Activated naive CD4-positive, alpha-beta T cell treated with anti-CD3 and anti-CD28 coated beads for 36 hours (primary cell): ENCODE measurements at regions of chr2 and their contacts with region 1.

Region 1: GRCh38 chr2:230902180-230902899 is 22.7 kb downstream of the GPR55 start:
- DNase-seq: peak; percentile 70
- H3K4me3 Mint-ChIP-seq: no peak overlapping the region
- H3K27ac Mint-ChIP-seq: no peak overlapping the region
- H3K4me1 Mint-ChIP-seq: peaks cover 34% of the 10 kb centered on the region
- H3K27me3 Mint-ChIP-seq: peaks cover 15% of the 10 kb centered on the region

Region 2: GRCh38 chr2:230847883-230848388 is 54.4 kb before region 1 on chr2:
- CTCF ChIA-PET with region 1: interaction called, 11 read pairs
- intact Hi-C with region 1: loop called (anchors 2 kb)
- DNase-seq: peak; percentile 97
- H3K4me3 Mint-ChIP-seq: no peak overlapping the region
- H3K27ac Mint-ChIP-seq: peak overlapping the region; percentile 31
- H3K4me1 Mint-ChIP-seq: peaks cover 14% of the 10 kb centered on the region
- H3K27me3 Mint-ChIP-seq: peaks cover 13% of the 10 kb centered on the region

Region 3: DNA sequence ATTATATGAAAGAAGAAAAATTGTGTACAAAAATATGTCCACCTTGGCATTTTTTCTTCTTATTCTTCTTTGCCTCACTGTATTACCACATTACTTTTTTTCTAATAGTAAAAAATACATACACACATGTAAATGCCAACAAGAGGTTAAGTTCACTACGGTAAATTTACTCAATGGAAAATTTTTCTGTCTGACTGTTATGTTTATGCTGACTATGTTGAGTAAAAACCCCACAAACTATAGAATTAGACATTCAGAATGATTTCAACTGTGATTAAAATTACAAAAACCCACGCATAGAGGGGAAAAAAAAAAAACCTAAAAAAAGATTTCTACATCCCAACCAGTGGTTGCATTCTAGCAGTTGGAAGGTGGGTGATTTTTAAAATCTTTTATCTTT is 17.3 kb after region 1 on chr2:
- CTCF ChIA-PET with region 1: interaction called, 7 read pairs
- intact Hi-C with region 1: loop called (anchors 1 kb)
- DNase-seq: no peak
- H3K4me3 Mint-ChIP-seq: peak overlapping the region; percentile 47
- H3K27ac Mint-ChIP-seq: no peak overlapping the region
- H3K4me1 Mint-ChIP-seq: peaks cover 67% of the 10 kb centered on the region
- H3K27me3 Mint-ChIP-seq: peaks cover 2% of the 10 kb centered on the region

Region 4: GRCh38 chr2:230932556-230933511 is 30.5 kb after region 1 on chr2:
- CTCF ChIA-PET with region 1: no interaction called
- intact Hi-C with region 1: no loop called
- DNase-seq: no peak
- H3K4me3 Mint-ChIP-seq: no peak overlapping the region
- H3K27ac Mint-ChIP-seq: no peak overlapping the region
- H3K4me1 Mint-ChIP-seq: peaks cover 2% of the 10 kb centered on the region
- H3K27me3 Mint-ChIP-seq: peaks cover 8% of the 10 kb centered on the region

Region 5: DNA sequence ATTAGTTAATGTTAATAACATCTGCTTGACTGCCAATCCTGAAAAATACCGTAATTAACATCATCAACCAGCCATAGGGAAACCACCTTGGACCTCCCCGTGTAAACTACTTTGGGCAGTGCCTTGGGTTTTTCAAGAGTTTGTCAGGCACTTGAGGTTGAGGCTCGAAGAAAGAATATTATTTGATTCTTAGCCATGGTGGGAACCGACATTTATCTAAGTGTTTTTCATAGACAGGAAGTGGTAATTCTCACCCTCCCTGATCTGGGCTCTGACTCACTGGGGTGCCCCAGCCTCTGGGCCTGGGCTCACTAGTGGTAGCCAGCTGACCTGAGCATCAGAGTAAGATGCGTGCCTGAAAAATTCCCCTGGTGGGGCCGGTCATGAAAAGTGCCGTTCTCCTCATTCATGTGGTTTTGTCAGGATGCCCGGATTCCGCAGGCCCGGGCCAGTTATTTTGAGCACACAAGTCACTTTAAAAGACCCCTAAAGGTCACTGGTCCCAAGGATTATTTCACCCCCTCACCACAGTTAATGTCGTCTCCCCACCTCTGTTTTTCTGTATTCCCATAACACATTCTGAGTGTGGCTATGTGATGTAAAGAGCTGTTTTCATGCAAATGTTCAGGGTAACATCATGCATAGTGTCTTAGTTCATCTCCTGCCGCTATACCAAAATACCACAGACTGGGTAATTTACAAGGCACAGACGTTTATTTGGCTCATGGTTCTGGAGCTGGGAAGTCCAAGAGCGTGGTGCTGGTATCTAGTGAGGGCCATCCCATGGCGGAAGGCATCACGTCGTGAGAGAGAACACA is 72.0 kb after region 1 on chr2:
- CTCF ChIA-PET with region 1: interaction called, 3 read pairs
- intact Hi-C with region 1: loop called (anchors 1 kb)
- DNase-seq: peak; percentile 87
- H3K4me3 Mint-ChIP-seq: no peak overlapping the region
- H3K27ac Mint-ChIP-seq: peak overlapping the region; percentile 73
- H3K4me1 Mint-ChIP-seq: peaks cover 21% of the 10 kb centered on the region
- H3K27me3 Mint-ChIP-seq: peaks cover 5% of the 10 kb centered on the region

Region 6: GRCh38 chr2:231463698-231464575 is 561.6 kb after region 1 on chr2 and contains the start of gene NCL:
- CTCF ChIA-PET with region 1: no interaction called
- intact Hi-C with region 1: loop called (anchors 10 kb)
- DNase-seq: peak; percentile 87
- H3K4me3 Mint-ChIP-seq: peak within 1 kb of the TSS; percentile 97
- H3K27ac Mint-ChIP-seq: peak within 1 kb of the TSS; percentile 98
- H3K4me1 Mint-ChIP-seq: peaks cover 46% of the 10 kb centered on the region
- H3K27me3 Mint-ChIP-seq: no peaks in the 10 kb centered on the region
- total RNA-seq, gene NCL: 908 to 911 TPM